ENCODE measurements at regions of chr1 and their contacts with region 1.

Region 1: GRCh38 chr1:91165033-91165654 is 143.3 kb upstream of the ZNF644 start:
- DNase-seq: peak; percentile 87

Region 2: GRCh38 chr1:90114521-90115141 is 1050.5 kb before region 1 on chr1:
- intact Hi-C with region 1: loop called (anchors 10 kb)
- DNase-seq: no peak

Region 3: DNA sequence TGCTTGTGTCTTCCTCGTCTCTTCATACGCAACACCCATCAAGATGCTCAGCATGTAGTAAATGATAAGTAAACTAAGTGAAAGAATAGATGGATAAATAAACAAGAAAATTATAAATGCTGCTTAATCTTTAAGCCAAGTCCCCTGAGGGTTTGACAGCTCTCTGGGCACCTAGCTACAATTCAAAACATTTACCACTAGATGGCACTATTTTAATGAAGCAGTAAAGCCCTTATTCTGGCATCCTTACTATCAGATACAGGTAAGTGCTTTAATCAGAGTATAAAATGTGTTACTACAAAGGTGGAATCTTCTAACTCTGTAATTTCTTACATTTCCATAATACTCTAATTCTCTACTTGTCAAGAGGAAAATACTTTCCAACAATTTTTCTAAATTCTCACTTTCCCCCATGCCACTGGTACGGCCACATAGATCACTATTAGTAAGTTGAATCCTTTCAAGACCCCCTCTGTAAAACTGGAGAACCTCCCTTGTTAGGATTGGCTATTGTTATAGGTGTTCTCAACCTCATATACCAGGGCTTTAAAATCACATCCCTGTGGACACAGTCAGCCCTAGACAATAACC is 585.8 kb before region 1 on chr1:
- intact Hi-C with region 1: loop called (anchors 5 kb)
- DNase-seq: no peak

Region 4: GRCh38 chr1:91261655-91262054 is 96.5 kb after region 1 on chr1:
- intact Hi-C with region 1: no loop called
- DNase-seq: no peak